Panc1 (cell line): ENCODE measurements at regions of chr19 and their contacts with region 1.

Region 1: GRCh38 chr19:38994667-38995066 is 19.1 kb upstream of the FBXO17 start:
- DNase-seq: no peak
- ATAC-seq: no peak
- H3K4me3 ChIP-seq: no peak overlapping the region
- H3K27ac ChIP-seq: no peak overlapping the region
- H3K4me1 ChIP-seq: 0 out of 2 replicates have a peak, but pooled peaks cover 6% of the 10 kb centered on the region
- H3K27me3 ChIP-seq: no peaks in the 10 kb centered on the region
- CTCF ChIP-seq: no peak

Region 2: DNA sequence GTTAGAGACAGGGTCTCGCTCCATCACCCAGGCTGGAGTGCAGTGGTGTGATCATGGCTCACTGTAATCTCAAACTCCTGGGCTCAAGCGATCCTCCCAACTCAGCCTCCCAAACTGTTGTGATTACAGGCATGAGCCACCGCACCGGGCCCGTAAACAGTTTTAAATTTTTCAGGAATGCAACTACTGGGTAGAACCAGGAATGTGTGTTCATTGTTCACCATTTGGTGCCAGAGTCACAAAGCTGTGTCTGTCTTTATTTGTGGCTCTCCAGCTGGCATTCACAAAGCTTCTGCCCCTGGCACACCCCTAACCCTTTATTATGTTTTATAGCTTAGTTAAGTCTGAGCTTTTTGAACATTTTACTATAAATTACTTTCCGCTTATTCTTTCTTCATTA is 69.7 kb after region 1 on chr19:
- CTCF ChIA-PET with region 1: no interaction called
- POLR2A ChIA-PET with region 1: interaction called, 8 read pairs
- in situ Hi-C with region 1: loop called (anchors 5 kb)
- intact Hi-C with region 1: no loop called
- DNase-seq: no peak
- ATAC-seq: peak; percentile 6; the same call in 1 of the 2 replicates
- H3K4me3 ChIP-seq: no peak overlapping the region
- H3K27ac ChIP-seq: peak overlapping the region; percentile 40
- H3K4me1 ChIP-seq: peaks cover 10% of the 10 kb centered on the region
- H3K27me3 ChIP-seq: no peaks in the 10 kb centered on the region
- CTCF ChIP-seq: no peak